AG04450 (cell line): ENCODE measurements at regions of chr12 and their contacts with region 1.

Region 1: DNA sequence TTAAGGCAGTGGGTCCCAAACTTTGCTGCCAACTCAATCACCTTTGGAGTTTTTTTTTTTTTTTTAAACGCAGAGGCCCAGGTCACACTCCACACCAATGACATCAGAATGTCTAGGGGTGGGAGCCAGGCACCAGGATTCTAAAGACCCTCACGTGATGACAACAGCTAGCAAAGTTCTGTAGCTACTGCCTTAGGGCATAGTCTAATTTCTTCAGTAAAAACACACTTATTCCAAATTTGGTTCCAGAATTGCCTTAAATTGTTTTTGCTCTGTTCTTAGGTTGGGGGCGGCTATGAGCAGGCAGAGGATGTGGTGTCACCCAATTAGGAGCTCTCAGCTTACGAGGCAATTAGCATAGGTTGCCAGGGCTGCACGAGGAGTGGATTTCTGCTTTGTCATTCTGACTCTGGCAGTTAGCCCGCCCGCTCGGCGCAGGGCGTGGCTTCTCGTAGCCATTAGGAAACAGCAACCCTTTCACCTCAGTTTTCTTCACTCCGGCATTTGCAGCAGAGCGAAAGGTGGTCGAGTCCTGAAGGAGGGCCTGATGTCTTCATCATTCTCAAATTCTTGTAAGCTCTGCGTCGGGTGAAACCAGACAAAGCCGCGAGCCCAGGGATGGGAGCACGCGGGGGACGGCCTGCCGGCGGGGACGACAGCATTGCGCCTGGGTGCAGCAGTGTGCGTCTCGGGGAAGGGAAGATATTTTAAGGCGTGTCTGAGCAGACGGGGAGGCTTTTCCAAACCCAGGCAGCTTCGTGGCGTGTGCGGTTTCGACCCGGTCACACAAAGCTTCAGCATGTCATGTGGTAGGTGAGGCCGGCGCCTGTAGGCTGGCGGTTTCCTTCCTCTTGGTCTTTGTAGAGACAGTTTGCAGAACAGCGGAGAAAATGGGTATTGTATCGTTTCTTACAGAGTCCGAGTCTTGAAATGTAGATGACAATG is 16.7 kb upstream of the EID3 start:
- DNase-seq: peak; percentile 94
- H3K4me3 ChIP-seq: peak overlapping the region; percentile 92
- H3K27ac ChIP-seq: peak overlapping the region; percentile 99
- H3K27me3 ChIP-seq: no peaks in the 10 kb centered on the region
- CTCF ChIP-seq: no peak

Region 2: DNA sequence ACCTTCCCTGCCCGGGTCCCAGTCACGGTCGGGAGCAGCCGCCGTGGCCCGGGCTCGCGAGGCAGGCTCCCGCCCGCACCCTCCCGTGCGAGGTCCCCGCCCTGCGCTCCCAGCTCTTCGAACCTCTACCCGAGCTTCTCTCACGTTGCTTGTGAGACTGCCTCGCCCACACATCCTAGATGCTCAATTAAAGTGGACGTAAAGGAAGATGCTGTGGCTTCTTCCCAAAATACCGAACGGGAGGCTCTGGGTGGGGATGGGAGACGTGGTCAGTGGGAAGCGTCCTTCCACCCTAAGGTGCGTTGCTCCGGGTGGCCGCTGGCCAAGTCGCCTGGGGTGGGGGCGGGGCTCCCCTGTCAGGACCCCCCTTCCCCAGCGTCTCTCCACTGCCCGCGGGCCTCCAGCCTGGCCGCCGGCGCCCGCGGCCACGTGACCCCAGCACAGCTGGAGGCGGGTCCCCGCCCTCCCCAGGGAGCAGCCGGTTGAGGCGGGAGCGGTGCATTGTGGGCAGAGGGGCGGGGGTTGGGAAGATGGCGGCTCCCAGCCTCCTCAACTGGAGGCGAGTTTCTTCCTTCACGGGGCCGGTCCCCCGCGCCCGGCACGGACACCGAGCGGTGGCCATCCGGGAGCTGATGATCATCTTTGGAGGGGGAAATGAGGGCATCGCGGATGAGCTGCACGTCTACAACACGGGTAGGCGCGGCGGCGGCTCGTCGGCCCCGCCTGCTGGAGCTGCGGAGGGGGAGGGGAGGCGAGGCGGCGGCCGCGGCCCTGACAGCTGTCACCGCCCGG is 222.6 kb before region 1 on chr12 and contains the start of gene HCFC2:
- CTCF ChIA-PET with region 1: no interaction called
- POLR2A ChIA-PET with region 1: interaction called, 10 read pairs
- DNase-seq: peak; percentile 70
- H3K4me3 ChIP-seq: peak within 1 kb of the TSS; percentile 93
- H3K27ac ChIP-seq: peak within 1 kb of the TSS; percentile 91
- H3K27me3 ChIP-seq: no peaks in the 10 kb centered on the region
- CTCF ChIP-seq: no peak
- polyA plus RNA-seq, gene HCFC2: 20.8 and 31.4 TPM in 2 replicates

Region 3: GRCh38 chr12:104215638-104216297 is 71.0 kb before region 1 on chr12 and contains the start of gene TXNRD1:
- CTCF ChIA-PET with region 1: interaction called, 5 read pairs
- POLR2A ChIA-PET with region 1: interaction called, 96 read pairs
- DNase-seq: no peak
- H3K4me3 ChIP-seq: peak within 1 kb of the TSS; percentile 62
- H3K27ac ChIP-seq: peak within 1 kb of the TSS; percentile 31
- H3K27me3 ChIP-seq: no peaks in the 10 kb centered on the region
- CTCF ChIP-seq: peak; percentile 83
- polyA plus RNA-seq, gene TXNRD1: 673 and 740 TPM in 2 replicates

Region 4: DNA sequence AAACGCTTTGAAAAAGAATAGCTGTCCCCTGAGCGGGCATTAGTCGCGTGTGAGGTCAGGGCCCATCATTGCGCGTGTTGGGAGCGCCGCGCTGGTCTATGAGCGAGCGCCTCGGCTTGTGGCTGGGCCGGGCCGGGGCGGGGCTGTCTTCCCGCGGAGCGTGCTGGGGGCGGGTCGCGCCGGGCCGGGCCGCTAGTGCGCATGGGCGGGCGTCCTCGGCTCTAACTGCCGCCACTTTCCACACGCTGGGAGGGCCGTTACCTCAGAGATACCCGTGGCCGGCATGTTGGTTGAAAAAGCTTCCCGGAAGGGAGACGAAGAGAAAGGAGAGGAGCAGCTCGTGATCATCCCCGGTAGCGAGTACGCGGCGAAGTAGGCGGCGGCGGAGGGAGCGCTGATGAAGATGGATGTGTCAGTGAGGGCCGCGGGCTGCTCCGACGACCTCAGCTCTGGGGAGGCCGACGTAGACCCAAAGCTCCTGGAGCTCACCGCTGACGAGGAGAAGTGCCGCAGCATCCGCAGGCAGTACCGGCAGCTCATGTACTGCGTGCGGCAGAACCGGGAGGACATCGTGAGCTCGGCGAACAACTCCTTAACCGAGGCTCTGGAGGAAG is 16.8 kb after region 1 on chr12 and contains the start of gene EID3:
- CTCF ChIA-PET with region 1: interaction called, 4 read pairs
- POLR2A ChIA-PET with region 1: interaction called, 12 read pairs
- DNase-seq: no peak
- H3K4me3 ChIP-seq: peak within 1 kb of the TSS; percentile 58
- H3K27ac ChIP-seq: peak within 1 kb of the TSS; percentile 71
- H3K27me3 ChIP-seq: no peaks in the 10 kb centered on the region
- CTCF ChIP-seq: no peak
- polyA plus RNA-seq, gene EID3: 1.8 and 2.5 TPM in 2 replicates